PC-9 (cell line): ENCODE measurements at regions of chr1 and their contacts with region 1.

Region 1: GRCh38 chr1:203267347-203267846 is 37.9 kb upstream of the BTG2 start:
- DNase-seq: peak; percentile 60 to 68
- H3K4me3 ChIP-seq: no peak overlapping the region
- H3K27ac ChIP-seq: no peak overlapping the region
- H3K4me1 ChIP-seq: no peaks in the 10 kb centered on the region
- H3K27me3 ChIP-seq: no peaks in the 10 kb centered on the region
- CTCF ChIP-seq: peak; percentile 91

Region 2: DNA sequence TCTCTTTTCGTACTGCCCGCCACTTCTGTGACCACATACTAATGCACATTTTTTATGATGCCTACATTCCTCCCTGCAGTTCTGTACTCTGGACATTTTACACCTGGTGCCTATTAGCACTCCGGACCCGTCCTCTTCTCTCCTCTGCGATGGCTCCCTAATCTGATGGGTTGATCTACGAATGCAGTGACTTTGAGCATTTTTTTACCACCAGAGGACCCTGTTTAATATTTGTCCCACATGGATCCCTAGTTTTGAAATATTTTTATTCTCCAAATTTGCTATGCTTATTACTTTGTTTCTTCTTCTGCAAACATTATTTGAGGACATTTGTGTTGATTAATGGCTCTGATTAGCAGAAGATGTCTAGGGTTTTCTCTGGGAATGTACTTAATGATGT is 235.9 kb before region 1 on chr1:
- CTCF ChIA-PET with region 1: interaction called, 23 read pairs
- POLR2A ChIA-PET with region 1: interaction called, 3 read pairs
- intact Hi-C with region 1: loop called (anchors 1 kb)
- DNase-seq: no peak
- H3K4me3 ChIP-seq: no peak overlapping the region
- H3K27ac ChIP-seq: no peak overlapping the region
- H3K4me1 ChIP-seq: peaks cover 4% of the 10 kb centered on the region
- H3K27me3 ChIP-seq: peaks cover 3% of the 10 kb centered on the region; the same call in 1 of the 2 replicates
- CTCF ChIP-seq: peak; percentile 68